ENCODE measurements at regions of chr2 and their contacts with region 1.

Region 1: GRCh38 chr2:224561234-224562005 is 23.7 kb downstream of the CUL3 start:
- DNase-seq: peak; percentile 41
- ATAC-seq: no peak
- H3K4me3 ChIP-seq: no peak overlapping the region
- H3K27ac ChIP-seq: no peak overlapping the region
- H3K4me1 ChIP-seq: peaks cover 6% of the 10 kb centered on the region; the same call in 1 of the 2 replicates
- H3K27me3 ChIP-seq: no peaks in the 10 kb centered on the region
- CTCF ChIP-seq: no peak
- POLR2A ChIP-seq: no peak
- RAD21 ChIP-seq: no peak

Region 2: DNA sequence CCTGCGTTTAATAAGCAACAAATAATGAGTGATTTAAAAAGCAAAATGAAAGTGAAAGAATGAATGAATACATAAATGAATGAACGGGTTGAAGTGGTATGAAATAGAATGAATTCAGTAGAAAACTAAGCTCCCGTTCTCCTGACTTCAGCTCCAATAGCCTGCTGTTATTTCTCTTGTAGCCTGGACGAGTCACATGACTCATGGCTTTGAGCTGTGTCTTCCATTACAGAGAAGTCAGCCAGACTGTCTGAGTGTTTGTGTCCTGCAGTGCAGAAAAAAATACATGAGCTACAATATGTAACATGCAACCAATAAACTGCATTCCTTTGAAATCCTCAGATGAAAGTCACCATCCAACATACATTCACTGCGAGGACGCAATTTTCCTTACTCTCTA is 980.5 kb before region 1 on chr2:
- CTCF ChIA-PET with region 1: no interaction called
- POLR2A ChIA-PET with region 1: no interaction called
- dilution Hi-C with region 1: no loop called
- in situ Hi-C with region 1: loop called (anchors 25 kb)
- intact Hi-C with region 1: no loop called
- DNase-seq: peak; percentile 84
- ATAC-seq: peak; percentile 84
- H3K4me3 ChIP-seq: no peak overlapping the region
- H3K27ac ChIP-seq: no peak overlapping the region
- H3K4me1 ChIP-seq: peaks cover 7% of the 10 kb centered on the region
- H3K27me3 ChIP-seq: no peaks in the 10 kb centered on the region
- CTCF ChIP-seq: no peak
- POLR2A ChIP-seq: no peak
- RAD21 ChIP-seq: no peak

Region 3: GRCh38 chr2:224837558-224837957 is 276.1 kb after region 1 on chr2:
- CTCF ChIA-PET with region 1: no interaction called
- POLR2A ChIA-PET with region 1: no interaction called
- dilution Hi-C with region 1: no loop called
- in situ Hi-C with region 1: no loop called
- intact Hi-C with region 1: no loop called
- DNase-seq: peak; percentile 95
- ATAC-seq: peak; percentile 89
- H3K4me3 ChIP-seq: no peak overlapping the region
- H3K27ac ChIP-seq: no peak overlapping the region
- H3K4me1 ChIP-seq: peaks cover 4% of the 10 kb centered on the region; the same call in 1 of the 2 replicates
- H3K27me3 ChIP-seq: no peaks in the 10 kb centered on the region
- CTCF ChIP-seq: peak; percentile 22
- POLR2A ChIP-seq: no peak
- RAD21 ChIP-seq: peak; percentile 42; the same call in 1 of the 2 replicates

Region 4: DNA sequence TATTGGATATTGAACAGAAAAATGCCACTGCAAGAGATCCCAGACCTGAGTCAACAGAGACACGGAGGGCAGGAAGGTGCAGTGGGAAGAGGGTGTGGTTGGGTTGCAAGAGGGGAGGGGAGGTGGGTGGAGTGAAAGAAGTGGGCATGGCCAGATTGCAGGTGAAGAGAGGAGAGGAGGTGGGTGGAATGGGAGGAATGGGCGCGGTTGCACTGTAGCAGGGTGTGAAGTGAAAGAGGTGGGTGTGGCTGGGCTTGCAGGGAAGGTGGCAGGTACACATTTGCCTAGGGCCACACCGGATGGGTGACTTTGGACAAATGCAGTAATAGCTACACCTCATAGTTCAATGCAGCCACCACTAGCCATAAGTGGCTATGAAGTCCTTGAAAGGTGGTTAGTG is 409.8 kb after region 1 on chr2:
- CTCF ChIA-PET with region 1: no interaction called
- POLR2A ChIA-PET with region 1: no interaction called
- dilution Hi-C with region 1: no loop called
- in situ Hi-C with region 1: no loop called
- intact Hi-C with region 1: no loop called
- DNase-seq: no peak
- ATAC-seq: no peak
- H3K4me3 ChIP-seq: no peak overlapping the region
- H3K27ac ChIP-seq: no peak overlapping the region
- H3K4me1 ChIP-seq: no peaks in the 10 kb centered on the region
- H3K27me3 ChIP-seq: no peaks in the 10 kb centered on the region
- CTCF ChIP-seq: no peak
- POLR2A ChIP-seq: no peak
- RAD21 ChIP-seq: no peak

Region 5: GRCh38 chr2:225137971-225138370 is 576.6 kb after region 1 on chr2:
- CTCF ChIA-PET with region 1: no interaction called
- POLR2A ChIA-PET with region 1: no interaction called
- dilution Hi-C with region 1: no loop called
- in situ Hi-C with region 1: no loop called
- intact Hi-C with region 1: no loop called
- DNase-seq: peak; percentile 40
- ATAC-seq: no peak
- H3K4me3 ChIP-seq: no peak overlapping the region
- H3K27ac ChIP-seq: no peak overlapping the region
- H3K4me1 ChIP-seq: no peaks in the 10 kb centered on the region
- H3K27me3 ChIP-seq: no peaks in the 10 kb centered on the region
- CTCF ChIP-seq: no peak
- POLR2A ChIP-seq: no peak
- RAD21 ChIP-seq: no peak

Measured in IMR-90 (cell line).